K562 (cell line): ENCODE measurements at regions of chr6 and their contacts with region 1.

Region 1: DNA sequence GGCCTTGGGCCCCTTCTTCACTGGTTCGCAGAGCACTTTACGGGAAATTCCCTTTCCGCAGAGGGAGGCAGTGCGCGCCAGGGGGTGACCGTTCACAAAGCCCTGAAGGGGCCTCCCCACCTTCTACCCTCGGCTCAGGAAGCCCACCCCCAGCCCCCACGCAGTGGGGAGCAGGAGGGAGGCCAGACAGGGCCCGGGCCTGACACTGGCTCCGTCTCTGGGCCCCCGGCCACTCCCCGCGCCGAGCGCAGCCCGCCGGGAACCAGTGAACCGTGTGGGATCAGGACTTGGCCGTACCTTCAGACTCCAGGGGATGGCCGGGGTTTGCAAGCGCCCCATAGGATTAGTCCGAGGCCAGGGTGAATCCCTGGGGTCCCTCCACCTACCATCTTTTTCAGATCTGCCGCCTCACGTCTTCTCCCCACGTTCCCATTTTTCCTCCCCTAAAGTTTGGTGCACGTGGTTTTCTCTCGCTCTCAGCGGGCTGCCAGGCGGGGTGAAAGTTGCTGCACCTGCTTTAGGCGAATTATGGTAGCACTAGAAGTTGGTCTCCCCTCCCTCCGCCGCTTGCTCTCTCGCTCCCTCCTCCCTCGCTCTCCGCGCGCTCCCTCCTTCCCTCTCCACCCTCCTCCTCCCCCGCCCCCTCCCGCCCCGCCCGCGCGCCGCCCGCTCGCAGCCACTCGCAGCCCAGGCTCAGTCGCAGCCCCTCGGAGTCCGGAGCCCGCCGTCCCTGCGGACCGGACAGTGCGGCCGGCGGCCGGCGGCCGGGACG is at the start of gene FOXP4:
- DNase-seq: peak; percentile 87 to 97 (median 92)
- ATAC-seq: peak; percentile 86
- H3K4me3 ChIP-seq: peak within 1 kb of the TSS; percentile 68
- H3K27ac ChIP-seq: peak within 1 kb of the TSS; percentile 77
- H3K4me1 ChIP-seq: peaks cover 28 to 36% of the 10 kb centered on the region in 2 experiments
- H3K27me3 ChIP-seq: no peaks in the 10 kb centered on the region
- CTCF ChIP-seq: peak in 1 of 3 experiments; percentile 15; a peak in 1 of 6 replicates
- EP300 ChIP-seq: no peak
- POLR2A ChIP-seq: peak; percentile 70; the same call in 1 of the 2 replicates
- RAD21 ChIP-seq: no peak; a peak in 2 of 4 replicates
- polyA plus RNA-seq, gene FOXP4: 0.11 TPM

Region 2: DNA sequence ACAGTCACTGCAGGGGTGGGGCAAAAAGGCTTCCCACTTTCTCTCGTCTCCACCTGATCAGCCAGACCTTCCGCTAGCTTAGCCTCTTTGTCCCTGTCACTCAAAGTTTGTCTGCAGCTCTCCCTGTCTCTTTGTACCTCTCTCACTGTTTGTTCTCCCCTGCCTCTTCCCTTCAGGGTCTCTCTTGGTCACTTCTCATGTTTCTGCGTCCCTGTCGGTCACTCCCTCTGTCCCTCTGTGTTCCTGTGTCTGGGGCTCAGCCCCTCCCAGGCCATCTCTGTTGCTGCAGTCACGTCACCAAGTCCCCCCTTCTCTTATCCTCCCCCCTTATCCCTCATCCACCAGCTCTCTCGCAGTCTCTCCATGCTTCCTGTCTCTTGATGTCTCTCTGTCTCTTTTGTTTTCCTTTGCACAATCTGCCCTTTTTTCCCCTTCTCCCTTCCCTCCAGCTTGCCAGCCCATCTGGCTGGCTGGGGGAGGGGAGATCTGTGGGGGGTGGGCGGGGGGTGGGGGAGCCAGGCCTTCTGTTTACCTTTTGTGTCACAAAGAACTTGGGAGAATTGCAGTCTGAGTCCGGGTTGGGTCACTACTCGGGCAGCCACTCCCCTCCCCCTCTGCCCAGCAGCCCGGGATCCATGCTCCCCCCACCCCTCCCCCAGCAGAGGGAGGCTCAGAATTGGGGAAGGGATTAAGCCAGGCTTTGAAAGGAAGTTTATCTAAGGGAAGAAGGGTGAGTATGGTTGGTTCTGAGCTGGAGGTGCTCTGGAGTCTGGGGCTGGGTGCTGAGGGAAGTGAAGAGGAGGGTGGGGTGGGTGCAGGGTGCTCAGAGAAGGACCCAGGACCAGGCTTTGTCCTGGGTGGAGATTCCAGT is 32.6 kb after region 1 on chr6:
- CTCF ChIA-PET with region 1: no interaction called
- POLR2A ChIA-PET with region 1: interaction called, 6 read pairs
- in situ Hi-C with region 1: no loop called
- intact Hi-C with region 1: loop called (anchors 1 kb)
- DNase-seq: peak; percentile 71 to 79 (median 76)
- ATAC-seq: peak; percentile 81
- H3K4me3 ChIP-seq: no peak overlapping the region
- H3K27ac ChIP-seq: peak overlapping the region; percentile 65; the same call in 2 of the 3 replicates
- H3K4me1 ChIP-seq: peaks cover 18 to 27% of the 10 kb centered on the region in 2 experiments
- H3K27me3 ChIP-seq: no peaks in the 10 kb centered on the region
- CTCF ChIP-seq: no peak
- EP300 ChIP-seq: no peak; the same call in 1 of the 2 replicates
- POLR2A ChIP-seq: no peak
- RAD21 ChIP-seq: no peak